Right cardiac atrium (tissue), 5 donors: ENCODE measurements at regions of chr9 and their contacts with region 1.

Region 1: GRCh38 chr9:130343445-130343918 is 77.9 kb downstream of the HMCN2 start:
- DNase-seq: peak in 1 of 3 donors; percentile 66
- ATAC-seq: peak in 1 of 2 donors; percentile 12
- H3K4me3 ChIP-seq: no peak overlapping the region
- H3K27ac ChIP-seq: no peak overlapping the region
- H3K4me1 ChIP-seq: no peaks in the 10 kb centered on the region
- H3K27me3 ChIP-seq: no peaks in the 10 kb centered on the region

Region 2: GRCh38 chr9:130107234-130107861 is 236.1 kb before region 1 on chr9:
- intact Hi-C with region 1: loop called (anchors 5 to 10 kb)
- DNase-seq: peak; percentile 86 to 95 (median 88)
- ATAC-seq: peak; percentile 58 to 77
- H3K4me3 ChIP-seq: no peak overlapping the region
- H3K27ac ChIP-seq: no peak overlapping the region
- H3K4me1 ChIP-seq: peaks cover 3% of the 10 kb centered on the region
- H3K27me3 ChIP-seq: no peaks in the 10 kb centered on the region

Region 3: DNA sequence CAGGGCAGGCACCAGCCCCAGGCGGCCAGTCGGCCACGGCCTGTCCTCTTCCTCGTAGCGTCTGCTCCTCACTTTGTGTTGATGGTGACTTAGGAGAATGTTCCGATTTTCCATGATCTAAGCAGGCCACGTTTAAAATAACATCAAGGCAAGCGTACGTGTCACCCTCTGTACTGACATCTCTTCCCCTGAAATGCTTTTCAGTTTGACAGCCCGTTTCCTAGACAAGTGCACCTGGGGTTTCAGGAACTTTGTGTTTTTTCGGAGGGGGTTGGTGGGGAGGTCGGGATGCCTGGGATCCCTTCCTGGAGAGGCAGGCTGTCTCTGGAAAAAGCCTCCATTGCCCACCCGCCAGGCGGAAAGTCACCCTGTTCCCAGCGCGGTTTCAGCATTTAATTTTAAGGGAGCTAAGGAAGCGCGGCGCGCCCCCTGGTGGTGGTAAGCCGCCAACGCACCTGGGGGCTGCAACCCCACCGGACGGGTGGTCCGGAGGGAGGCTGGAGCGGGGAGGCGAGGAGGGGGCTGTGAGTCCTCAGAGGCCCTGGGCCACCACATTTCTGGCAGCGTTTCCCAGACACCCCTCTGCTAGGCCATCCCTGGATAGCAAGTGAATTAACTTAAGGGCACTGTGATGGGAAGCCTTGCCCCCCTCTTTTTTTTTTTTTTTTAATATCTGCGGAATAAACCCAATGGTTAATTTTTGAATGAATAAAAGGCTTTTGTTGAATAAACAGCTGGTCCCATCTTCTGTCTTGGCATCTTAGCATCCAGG is 107.4 kb before region 1 on chr9:
- intact Hi-C with region 1: loop called in 3 of 4 experiments (anchors 5 to 10 kb)
- DNase-seq: peak; percentile 64 to 86 (median 86)
- ATAC-seq: peak; percentile 49 to 50
- H3K4me3 ChIP-seq: no peak overlapping the region
- H3K27ac ChIP-seq: no peak overlapping the region
- H3K4me1 ChIP-seq: no peaks in the 10 kb centered on the region
- H3K27me3 ChIP-seq: no peaks in the 10 kb centered on the region

Region 4: GRCh38 chr9:130243015-130243734 is 100.3 kb before region 1 on chr9:
- intact Hi-C with region 1: loop called in 3 of 4 experiments (anchors 5 to 10 kb)
- DNase-seq: peak; percentile 65 to 91 (median 87)
- ATAC-seq: peak; percentile 62 to 65
- H3K4me3 ChIP-seq: no peak overlapping the region
- H3K27ac ChIP-seq: no peak overlapping the region
- H3K4me1 ChIP-seq: no peaks in the 10 kb centered on the region
- H3K27me3 ChIP-seq: no peaks in the 10 kb centered on the region

Region 5: DNA sequence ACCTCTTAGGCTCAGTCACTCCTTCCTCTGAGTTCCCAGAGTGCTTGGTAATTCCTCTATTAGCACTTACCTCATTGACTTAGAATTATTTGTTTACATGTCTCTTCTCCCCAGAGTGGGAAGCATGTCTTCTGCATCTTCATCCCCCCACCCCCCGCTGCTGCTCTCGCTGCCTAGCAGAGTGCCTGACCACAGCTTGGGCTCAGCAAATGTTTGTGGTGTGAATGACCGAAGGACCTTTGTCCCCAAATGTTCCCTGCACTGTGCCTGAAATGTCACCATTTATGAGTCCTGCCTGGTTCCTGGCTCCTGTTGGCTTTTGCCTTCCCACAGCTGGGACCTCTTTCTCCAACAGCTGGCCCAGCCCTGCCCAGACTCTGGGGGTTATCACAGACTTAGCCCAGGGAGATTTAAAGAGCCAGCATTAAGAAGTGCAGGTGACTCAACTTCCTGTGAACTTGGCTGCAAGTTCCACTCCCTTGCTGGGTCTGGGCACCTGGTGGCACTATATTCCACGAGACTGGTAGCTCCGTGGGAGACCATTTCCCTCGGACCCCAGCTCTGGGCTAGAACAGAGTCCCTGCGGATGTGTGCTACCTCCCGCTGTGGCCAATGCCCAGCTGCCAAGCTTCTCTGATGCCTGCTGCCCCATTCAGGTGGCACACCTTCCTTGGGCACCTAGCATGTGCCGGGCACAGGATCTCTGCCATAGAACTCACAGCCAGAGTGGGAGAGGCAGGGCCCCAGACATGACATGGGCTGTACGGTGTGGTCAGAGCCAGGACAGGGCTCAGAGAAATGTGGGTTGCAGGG is 79.7 kb before region 1 on chr9:
- intact Hi-C with region 1: loop called in 2 of 4 experiments (anchors 5 kb)
- DNase-seq: no peak
- ATAC-seq: peak in 1 of 2 donors; percentile 30
- H3K4me3 ChIP-seq: no peak overlapping the region
- H3K27ac ChIP-seq: no peak overlapping the region
- H3K4me1 ChIP-seq: no peaks in the 10 kb centered on the region
- H3K27me3 ChIP-seq: no peaks in the 10 kb centered on the region